Calu3 (cell line): ENCODE measurements at regions of chr1 and their contacts with region 1.

Region 1: DNA sequence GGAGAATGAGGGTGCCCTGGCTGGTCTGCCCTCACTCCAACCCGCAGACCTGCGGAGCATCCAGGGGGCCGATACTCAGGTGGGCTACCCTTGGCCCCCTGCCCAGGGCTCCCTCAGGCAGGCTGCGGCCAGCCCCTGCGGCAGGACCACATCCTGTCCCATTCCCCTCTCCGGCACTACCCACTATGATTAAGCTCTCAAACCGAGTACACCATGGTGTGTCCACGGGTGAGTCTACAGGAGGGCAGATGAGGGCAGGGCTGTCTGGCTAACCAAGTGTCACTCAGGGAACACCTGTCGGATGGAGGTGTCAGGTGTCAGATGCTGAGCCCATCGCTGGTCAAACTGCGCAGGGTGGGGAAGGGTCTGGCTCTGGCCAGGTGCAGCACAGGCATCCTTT is 47.2 kb downstream of the SLC66A1 start:
- DNase-seq: no peak
- H3K4me3 Mint-ChIP-seq: no peak overlapping the region
- H3K27ac Mint-ChIP-seq: no peak overlapping the region
- H3K4me1 Mint-ChIP-seq: no peaks in the 10 kb centered on the region
- H3K27me3 Mint-ChIP-seq: no peaks in the 10 kb centered on the region
- CTCF ChIP-seq: no peak

Region 2: DNA sequence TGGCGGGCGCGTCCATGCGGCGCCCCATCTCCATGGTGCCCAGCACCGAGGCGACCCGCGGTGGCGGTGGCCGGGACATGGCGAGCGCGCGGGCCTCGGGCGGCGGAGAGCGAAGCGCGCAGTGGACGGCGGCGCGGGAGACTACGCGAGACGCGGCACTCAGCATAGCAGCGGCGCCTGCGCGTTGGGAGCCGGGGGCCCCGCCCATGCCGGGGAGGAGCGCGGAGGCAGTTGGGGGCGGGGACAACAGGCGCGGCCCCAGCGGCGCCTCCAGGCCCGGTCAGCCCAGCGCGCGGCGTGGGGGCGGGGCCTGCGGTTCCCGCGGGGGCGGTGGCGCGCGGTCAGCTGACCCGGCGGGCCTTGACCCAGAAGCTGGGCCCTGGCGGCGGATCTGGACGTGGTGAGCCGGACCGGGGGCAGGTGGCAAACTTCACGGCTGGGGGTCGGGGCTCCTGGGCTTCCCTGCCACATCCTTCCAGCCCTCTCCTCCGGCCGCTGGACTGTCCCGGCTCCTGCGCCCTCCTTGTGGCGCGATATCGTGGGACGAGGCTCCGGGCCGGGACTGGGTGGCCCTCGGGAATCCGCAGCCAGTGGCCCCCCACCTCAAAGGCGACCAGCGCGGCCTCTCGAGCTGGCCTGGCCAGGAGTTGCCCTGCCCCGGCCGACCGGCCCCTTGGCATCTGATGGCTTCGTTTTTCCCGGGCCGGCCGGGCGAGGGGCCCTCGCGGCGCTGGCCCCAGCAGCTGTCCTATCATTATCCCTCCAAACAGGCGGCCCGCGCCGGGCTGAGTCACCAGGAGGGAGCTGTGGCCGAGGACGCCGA is 47.2 kb before region 1 on chr1 and contains the starts of genes AKR7A2 and SLC66A1:
- CTCF ChIA-PET with region 1: no interaction called
- intact Hi-C with region 1: no loop called
- DNase-seq: peak; percentile 93
- H3K4me3 Mint-ChIP-seq: peak within 1 kb of the TSS; percentile 67
- H3K27ac Mint-ChIP-seq: peak within 1 kb of the TSS; percentile 20
- H3K4me1 Mint-ChIP-seq: peaks cover 26% of the 10 kb centered on the region
- H3K27me3 Mint-ChIP-seq: no peaks in the 10 kb centered on the region
- CTCF ChIP-seq: no peak
- total RNA-seq, gene AKR7A2: 25.7 and 26.3 TPM in 2 replicates
- total RNA-seq, gene SLC66A1: 10.0 and 13.1 TPM in 2 replicates

Region 3: GRCh38 chr1:19333587-19334354 is 25.6 kb before region 1 on chr1:
- CTCF ChIA-PET with region 1: no interaction called
- intact Hi-C with region 1: loop called (anchors 2 kb)
- DNase-seq: no peak
- H3K4me3 Mint-ChIP-seq: no peak overlapping the region
- H3K27ac Mint-ChIP-seq: no peak overlapping the region
- H3K4me1 Mint-ChIP-seq: peaks cover 9% of the 10 kb centered on the region
- H3K27me3 Mint-ChIP-seq: no peaks in the 10 kb centered on the region
- CTCF ChIP-seq: no peak

Region 4: GRCh38 chr1:19448491-19449439 is 89.4 kb after region 1 on chr1:
- CTCF ChIA-PET with region 1: no interaction called
- intact Hi-C with region 1: no loop called
- DNase-seq: no peak
- H3K4me3 Mint-ChIP-seq: no peak overlapping the region
- H3K27ac Mint-ChIP-seq: no peak overlapping the region
- H3K4me1 Mint-ChIP-seq: peaks cover 40% of the 10 kb centered on the region
- H3K27me3 Mint-ChIP-seq: no peaks in the 10 kb centered on the region
- CTCF ChIP-seq: no peak